ENCODE measurements at regions of chr13 and their contacts with region 1.

Region 1: DNA sequence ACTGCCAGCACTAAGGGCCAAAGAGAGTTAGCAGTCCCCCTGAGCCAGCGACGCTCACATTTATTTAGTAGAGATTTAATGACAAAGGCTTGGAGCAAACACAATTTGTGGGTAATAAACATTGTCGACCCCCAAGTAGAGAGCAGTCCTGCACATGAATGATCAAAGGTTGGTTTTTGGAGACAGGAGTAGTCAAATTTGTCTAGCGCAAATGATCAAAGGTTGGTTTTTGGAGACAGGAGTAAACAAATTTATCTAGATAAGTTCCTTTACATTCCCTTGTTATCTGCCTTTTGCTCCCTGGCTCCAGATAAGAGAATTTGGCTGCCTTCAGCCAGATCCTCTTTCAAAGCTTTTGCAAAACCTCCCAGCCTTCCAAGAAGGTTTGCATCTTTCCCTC is 26.9 kb downstream of the METTL21C start:
- DNase-seq: peak; percentile 47 to 53
- H3K4me3 ChIP-seq: no peak overlapping the region
- H3K4me3 Mint-ChIP-seq: peak overlapping the region; percentile 0
- H3K27ac Mint-ChIP-seq: peak overlapping the region; percentile 62
- H3K4me1 ChIP-seq: peaks cover 48% of the 10 kb centered on the region
- H3K4me1 Mint-ChIP-seq: peaks cover 10% of the 10 kb centered on the region
- H3K27me3 ChIP-seq: no peaks in the 10 kb centered on the region
- H3K27me3 Mint-ChIP-seq: no peaks in the 10 kb centered on the region
- CTCF ChIP-seq: no peak

Region 2: GRCh38 chr13:102227741-102228140 is 440.2 kb before region 1 on chr13:
- CTCF ChIA-PET with region 1: no interaction called
- POLR2A ChIA-PET with region 1: no interaction called
- intact Hi-C with region 1: no loop called
- DNase-seq: no peak
- H3K4me3 ChIP-seq: no peak overlapping the region
- H3K4me3 Mint-ChIP-seq: no peak overlapping the region
- H3K27ac Mint-ChIP-seq: no peak overlapping the region
- H3K4me1 ChIP-seq: no peaks in the 10 kb centered on the region
- H3K4me1 Mint-ChIP-seq: no peaks in the 10 kb centered on the region
- H3K27me3 ChIP-seq: no peaks in the 10 kb centered on the region
- H3K27me3 Mint-ChIP-seq: peaks cover 18% of the 10 kb centered on the region
- CTCF ChIP-seq: no peak

Region 3: DNA sequence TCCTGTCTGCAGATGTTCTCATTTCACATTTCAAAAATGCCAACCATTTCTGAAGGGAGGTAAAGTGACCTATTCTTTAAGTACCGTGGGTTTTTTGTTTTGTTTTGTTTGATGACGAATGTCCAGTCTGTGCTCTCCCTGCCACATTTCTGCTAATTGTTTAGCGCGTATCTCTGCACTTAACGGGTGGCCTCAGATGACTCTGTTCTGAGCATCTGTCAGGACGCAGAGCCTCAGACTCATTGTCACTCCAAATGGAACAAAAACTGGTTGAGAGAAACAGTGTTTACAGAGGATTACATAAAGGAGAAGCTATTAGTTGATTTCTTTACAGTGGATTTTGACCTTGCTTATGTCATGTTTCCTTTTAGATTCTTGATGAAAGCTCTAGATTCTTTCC is 47.4 kb before region 1 on chr13:
- CTCF ChIA-PET with region 1: no interaction called
- POLR2A ChIA-PET with region 1: no interaction called
- intact Hi-C with region 1: no loop called
- DNase-seq: no peak
- H3K4me3 ChIP-seq: no peak overlapping the region
- H3K4me3 Mint-ChIP-seq: no peak overlapping the region
- H3K27ac Mint-ChIP-seq: no peak overlapping the region
- H3K4me1 ChIP-seq: no peaks in the 10 kb centered on the region
- H3K4me1 Mint-ChIP-seq: no peaks in the 10 kb centered on the region
- H3K27me3 ChIP-seq: no peaks in the 10 kb centered on the region
- H3K27me3 Mint-ChIP-seq: no peaks in the 10 kb centered on the region
- CTCF ChIP-seq: no peak

Region 4: GRCh38 chr13:102651892-102652291 is 16.0 kb before region 1 on chr13:
- CTCF ChIA-PET with region 1: no interaction called
- POLR2A ChIA-PET with region 1: no interaction called
- intact Hi-C with region 1: loop called (anchors 1 kb)
- DNase-seq: no peak
- H3K4me3 ChIP-seq: no peak overlapping the region
- H3K4me3 Mint-ChIP-seq: no peak overlapping the region
- H3K27ac Mint-ChIP-seq: peak overlapping the region; percentile 57
- H3K4me1 ChIP-seq: peaks cover 32% of the 10 kb centered on the region
- H3K4me1 Mint-ChIP-seq: peaks cover 7% of the 10 kb centered on the region
- H3K27me3 ChIP-seq: no peaks in the 10 kb centered on the region
- H3K27me3 Mint-ChIP-seq: no peaks in the 10 kb centered on the region
- CTCF ChIP-seq: no peak

Region 5: DNA sequence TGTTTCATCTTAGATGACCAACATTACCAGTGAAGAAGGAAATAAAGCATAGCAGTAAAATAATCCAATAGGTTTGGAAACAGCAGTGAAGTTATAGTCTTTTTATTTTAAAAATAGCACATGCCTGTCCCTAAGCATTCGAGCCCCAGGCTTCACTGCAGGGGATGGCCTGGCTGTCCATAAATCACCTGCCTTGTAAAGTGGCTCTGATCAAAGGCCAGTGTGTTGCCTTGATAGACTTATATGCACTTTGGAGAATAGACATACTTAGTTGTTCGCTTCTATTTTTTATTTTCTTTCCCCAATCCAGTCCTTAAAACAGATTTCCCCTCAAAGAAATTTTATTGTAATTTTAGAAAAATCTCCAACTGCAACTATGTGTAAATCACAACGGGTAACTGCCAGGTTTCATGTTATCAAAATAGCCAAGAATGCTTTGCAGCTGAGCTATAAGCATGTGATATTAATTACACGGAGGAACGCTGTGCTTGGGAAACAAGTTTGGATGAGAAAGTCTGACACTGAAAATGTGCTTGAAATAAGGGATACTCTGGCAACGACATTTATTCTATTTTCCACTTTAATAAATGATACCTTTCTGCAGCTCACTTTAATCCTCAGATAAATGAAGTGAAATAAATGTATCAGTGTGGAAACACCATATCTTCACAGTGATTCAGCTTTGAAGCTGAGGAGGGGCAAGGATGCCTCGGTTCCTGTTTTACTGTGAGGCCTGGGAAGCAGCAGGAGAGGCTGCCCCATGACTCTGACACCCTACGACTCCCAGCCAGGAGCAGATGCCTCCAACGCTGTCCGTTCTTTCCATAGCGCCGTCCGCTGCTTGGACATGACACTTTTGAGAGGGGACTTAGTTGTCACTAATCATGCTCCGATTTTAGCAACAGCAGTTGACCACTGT is 32.4 kb after region 1 on chr13:
- CTCF ChIA-PET with region 1: no interaction called
- POLR2A ChIA-PET with region 1: no interaction called
- intact Hi-C with region 1: loop called (anchors 5 kb)
- DNase-seq: no peak
- H3K4me3 ChIP-seq: no peak overlapping the region
- H3K4me3 Mint-ChIP-seq: no peak overlapping the region
- H3K27ac Mint-ChIP-seq: no peak overlapping the region
- H3K4me1 ChIP-seq: peaks cover 20% of the 10 kb centered on the region
- H3K4me1 Mint-ChIP-seq: peaks cover 16% of the 10 kb centered on the region
- H3K27me3 ChIP-seq: no peaks in the 10 kb centered on the region
- H3K27me3 Mint-ChIP-seq: no peaks in the 10 kb centered on the region
- CTCF ChIP-seq: no peak

Measured in Caco-2 (cell line).